ENCODE measurements at regions of chr20 and their contacts with region 1.

Region 1: GRCh38 chr20:17995967-17996819 is 27.4 kb downstream of the MGME1 start:
- DNase-seq: peak; percentile 79
- ATAC-seq: peak; percentile 94
- H3K4me3 ChIP-seq: no peak overlapping the region
- H3K4me3 Mint-ChIP-seq: no peak overlapping the region
- H3K27ac ChIP-seq: no peak overlapping the region
- H3K27ac Mint-ChIP-seq: peak overlapping the region; percentile 54
- H3K4me1 ChIP-seq: peaks cover 16% of the 10 kb centered on the region in 2 donors
- H3K4me1 Mint-ChIP-seq: peaks cover 22% of the 10 kb centered on the region
- H3K27me3 ChIP-seq: no peaks in the 10 kb centered on the region
- H3K27me3 Mint-ChIP-seq: peaks cover 3% of the 10 kb centered on the region
- CTCF ChIP-seq: peak; percentile 99

Region 2: DNA sequence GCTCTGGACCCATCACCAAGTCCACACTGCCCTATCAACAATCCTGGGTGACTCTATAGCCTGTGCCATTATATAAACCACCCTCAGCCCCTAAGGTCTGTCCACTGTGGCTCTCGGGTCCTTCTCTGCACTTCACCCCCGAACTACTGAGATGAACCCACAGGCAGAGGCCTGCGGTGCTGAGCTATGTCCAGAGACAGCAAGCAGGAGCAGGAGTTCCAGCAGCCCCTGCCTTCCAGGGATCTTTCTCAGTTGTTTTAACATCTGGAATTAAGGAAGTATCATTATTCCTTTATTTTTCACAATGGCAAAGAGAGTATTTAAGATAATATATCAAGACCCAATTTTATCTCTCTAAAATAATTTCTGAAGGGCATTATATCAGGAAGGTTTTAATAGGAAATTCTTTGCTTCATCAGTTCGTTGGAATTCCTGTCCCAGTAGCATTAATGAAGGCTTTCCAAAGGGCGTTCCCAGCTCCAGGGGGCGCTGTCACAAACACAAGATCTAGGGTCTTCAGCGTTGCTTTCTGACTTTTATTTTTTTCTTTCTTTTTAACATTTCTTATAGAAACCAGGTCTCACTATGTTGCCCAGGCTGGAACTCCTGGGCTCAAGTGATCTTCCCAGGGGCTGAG is 341.4 kb before region 1 on chr20:
- CTCF ChIA-PET with region 1: interaction called, 7 read pairs
- POLR2A ChIA-PET with region 1: no interaction called
- intact Hi-C with region 1: loop called (anchors 1 kb)
- DNase-seq: no peak
- ATAC-seq: no peak
- H3K4me3 ChIP-seq: no peak overlapping the region
- H3K4me3 Mint-ChIP-seq: no peak overlapping the region
- H3K27ac ChIP-seq: no peak overlapping the region
- H3K27ac Mint-ChIP-seq: no peak overlapping the region
- H3K4me1 ChIP-seq: no peaks in the 10 kb centered on the region
- H3K4me1 Mint-ChIP-seq: peaks cover 4% of the 10 kb centered on the region
- H3K27me3 ChIP-seq: no peaks in the 10 kb centered on the region
- H3K27me3 Mint-ChIP-seq: no peaks in the 10 kb centered on the region
- CTCF ChIP-seq: peak; percentile 45

Region 3: GRCh38 chr20:17676942-17677341 is 319.3 kb before region 1 on chr20:
- CTCF ChIA-PET with region 1: interaction called, 54 read pairs
- POLR2A ChIA-PET with region 1: no interaction called
- intact Hi-C with region 1: loop called (anchors 1 kb)
- DNase-seq: no peak
- ATAC-seq: no peak
- H3K4me3 ChIP-seq: no peak overlapping the region
- H3K4me3 Mint-ChIP-seq: no peak overlapping the region
- H3K27ac ChIP-seq: no peak overlapping the region
- H3K27ac Mint-ChIP-seq: no peak overlapping the region
- H3K4me1 ChIP-seq: peaks cover 11% of the 10 kb centered on the region in 2 donors
- H3K4me1 Mint-ChIP-seq: peaks cover 15% of the 10 kb centered on the region
- H3K27me3 ChIP-seq: no peaks in the 10 kb centered on the region
- H3K27me3 Mint-ChIP-seq: no peaks in the 10 kb centered on the region
- CTCF ChIP-seq: no peak

Region 4: GRCh38 chr20:17938871-17939619 is 57.1 kb before region 1 on chr20:
- CTCF ChIA-PET with region 1: interaction called, 34 read pairs
- POLR2A ChIA-PET with region 1: no interaction called
- intact Hi-C with region 1: loop called (anchors 1 kb)
- DNase-seq: peak; percentile 79
- ATAC-seq: peak; percentile 89
- H3K4me3 ChIP-seq: no peak overlapping the region
- H3K4me3 Mint-ChIP-seq: peak overlapping the region; percentile 54
- H3K27ac ChIP-seq: peak overlapping the region in 1 of 2 donors; percentile 55
- H3K27ac Mint-ChIP-seq: peak overlapping the region; percentile 56
- H3K4me1 ChIP-seq: peaks cover 24 to 26% of the 10 kb centered on the region in 2 donors
- H3K4me1 Mint-ChIP-seq: peaks cover 36% of the 10 kb centered on the region
- H3K27me3 ChIP-seq: no peaks in the 10 kb centered on the region
- H3K27me3 Mint-ChIP-seq: no peaks in the 10 kb centered on the region
- CTCF ChIP-seq: peak; percentile 88

Region 5: GRCh38 chr20:17958373-17959256 is 37.6 kb before region 1 on chr20:
- CTCF ChIA-PET with region 1: interaction called, 7 read pairs
- POLR2A ChIA-PET with region 1: interaction called, 6 read pairs
- intact Hi-C with region 1: loop called (anchors 5 kb)
- DNase-seq: no peak
- ATAC-seq: no peak
- H3K4me3 ChIP-seq: peak overlapping the region in 1 of 5 experiments; percentile 22
- H3K4me3 Mint-ChIP-seq: peak overlapping the region; percentile 77
- H3K27ac ChIP-seq: peak overlapping the region; percentile 4 to 77
- H3K27ac Mint-ChIP-seq: peak overlapping the region; percentile 86
- H3K4me1 ChIP-seq: peaks cover 88 to 96% of the 10 kb centered on the region in 2 donors
- H3K4me1 Mint-ChIP-seq: peaks cover 91% of the 10 kb centered on the region
- H3K27me3 ChIP-seq: no peaks in the 10 kb centered on the region
- H3K27me3 Mint-ChIP-seq: no peaks in the 10 kb centered on the region
- CTCF ChIP-seq: no peak

Region 6: GRCh38 chr20:18032977-18033892 is 37.0 kb after region 1 on chr20:
- CTCF ChIA-PET with region 1: no interaction called
- POLR2A ChIA-PET with region 1: no interaction called
- intact Hi-C with region 1: no loop called
- DNase-seq: no peak
- ATAC-seq: no peak
- H3K4me3 ChIP-seq: no peak overlapping the region
- H3K4me3 Mint-ChIP-seq: no peak overlapping the region
- H3K27ac ChIP-seq: no peak overlapping the region
- H3K27ac Mint-ChIP-seq: no peak overlapping the region
- H3K4me1 ChIP-seq: no peaks in the 10 kb centered on the region
- H3K4me1 Mint-ChIP-seq: no peaks in the 10 kb centered on the region
- H3K27me3 ChIP-seq: peaks cover 0 to 4% (median 0%) of the 10 kb centered on the region in 4 experiments
- H3K27me3 Mint-ChIP-seq: peaks cover 16% of the 10 kb centered on the region
- CTCF ChIP-seq: no peak

Measured in B cell (primary cell).